Left lung (tissue), 14 donors: ENCODE measurements at regions of chr1 and their contacts with region 1.

Region 1: DNA sequence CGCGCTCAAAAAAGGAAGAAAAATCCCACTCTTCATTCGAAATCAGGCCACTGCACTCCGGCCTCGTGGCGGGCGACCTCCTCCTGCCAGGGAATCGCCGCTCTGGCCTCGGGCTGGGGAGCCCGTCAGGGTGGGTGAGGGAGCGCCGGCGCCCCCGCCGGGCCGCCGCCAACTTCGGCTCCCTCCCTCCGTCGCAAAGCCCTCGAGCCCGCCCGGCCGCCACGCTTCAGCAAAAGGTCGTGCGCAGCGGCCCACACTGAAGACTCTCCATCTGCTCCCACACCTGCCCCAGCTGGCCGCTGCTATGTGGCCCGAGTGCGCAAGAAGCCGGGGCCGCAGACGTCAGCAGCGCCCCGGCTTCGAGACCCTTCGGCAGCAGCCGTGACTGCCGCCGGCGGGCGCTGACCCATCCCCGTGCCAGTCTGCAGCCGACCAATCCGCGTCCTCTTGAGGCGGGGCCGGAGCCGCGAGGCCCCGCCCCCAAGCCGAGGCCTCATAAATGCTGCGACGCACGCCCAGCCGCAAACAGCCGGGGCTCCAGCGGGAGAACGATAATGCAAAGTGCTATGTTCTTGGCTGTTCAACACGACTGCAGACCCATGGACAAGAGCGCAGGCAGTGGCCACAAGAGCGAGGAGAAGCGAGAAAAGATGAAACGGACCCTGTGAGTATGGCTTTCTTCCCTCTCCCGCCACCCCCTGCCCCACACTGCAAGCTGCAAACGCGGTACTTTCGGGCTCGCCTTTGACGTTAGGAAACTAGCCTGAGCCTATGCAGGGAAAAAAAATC is at the start of gene RGS2:
- DNase-seq: peak; percentile 93 to 97 (median 96)
- ATAC-seq: peak; percentile 95
- H3K4me3 ChIP-seq: peak within 1 kb of the TSS; percentile 61 to 62
- H3K27ac ChIP-seq: peak within 1 kb of the TSS; percentile 93 to 96
- H3K4me1 ChIP-seq: peaks cover 4 to 56% of the 10 kb centered on the region in 2 donors
- H3K27me3 ChIP-seq: no peaks in the 10 kb centered on the region
- CTCF ChIP-seq: peak in 1 of 2 donors; percentile 13
- polyA plus RNA-seq, gene RGS2: 88.3 to 182 (median 140) TPM

Region 2: GRCh38 chr1:192654591-192655251 is 154.0 kb before region 1 on chr1:
- intact Hi-C with region 1: no loop called
- DNase-seq: no peak
- ATAC-seq: no peak
- H3K4me3 ChIP-seq: no peak overlapping the region
- H3K27ac ChIP-seq: no peak overlapping the region
- H3K4me1 ChIP-seq: no peaks in the 10 kb centered on the region
- H3K27me3 ChIP-seq: no peaks in the 10 kb centered on the region
- CTCF ChIP-seq: no peak

Region 3: DNA sequence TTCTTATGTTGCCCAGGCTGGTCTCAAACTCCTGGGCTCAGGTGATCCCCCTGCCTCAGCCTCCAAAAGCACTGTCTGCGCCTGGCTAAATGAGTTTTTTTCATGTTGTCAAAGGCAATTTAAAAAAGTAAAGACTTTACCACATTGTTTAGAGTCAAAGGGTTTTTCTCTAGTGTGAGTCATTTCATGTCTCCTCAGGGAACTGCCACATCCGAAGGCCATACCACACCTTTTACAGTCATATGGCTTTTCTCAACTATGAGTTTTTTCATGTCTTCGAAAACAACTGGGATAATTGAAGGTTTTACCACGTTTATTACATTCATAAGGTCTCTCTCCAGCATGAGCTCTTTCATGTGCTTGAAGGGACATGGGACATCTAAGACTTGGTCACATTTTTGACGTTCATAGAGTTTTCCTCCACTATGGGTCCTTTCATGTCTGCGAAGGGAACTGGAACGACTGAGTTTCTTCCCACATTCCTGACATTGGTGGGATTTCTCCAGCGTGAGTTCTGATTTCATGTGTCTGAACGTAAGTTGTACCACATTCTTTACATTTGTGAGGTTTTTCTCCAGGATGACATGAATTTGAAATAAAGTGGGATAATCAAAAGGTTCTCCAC is 184.8 kb after region 1 on chr1:
- intact Hi-C with region 1: no loop called
- DNase-seq: no peak
- ATAC-seq: no peak
- H3K4me3 ChIP-seq: no peak overlapping the region
- H3K27ac ChIP-seq: no peak overlapping the region
- H3K4me1 ChIP-seq: no peaks in the 10 kb centered on the region
- H3K27me3 ChIP-seq: no peaks in the 10 kb centered on the region
- CTCF ChIP-seq: no peak

Region 4: DNA sequence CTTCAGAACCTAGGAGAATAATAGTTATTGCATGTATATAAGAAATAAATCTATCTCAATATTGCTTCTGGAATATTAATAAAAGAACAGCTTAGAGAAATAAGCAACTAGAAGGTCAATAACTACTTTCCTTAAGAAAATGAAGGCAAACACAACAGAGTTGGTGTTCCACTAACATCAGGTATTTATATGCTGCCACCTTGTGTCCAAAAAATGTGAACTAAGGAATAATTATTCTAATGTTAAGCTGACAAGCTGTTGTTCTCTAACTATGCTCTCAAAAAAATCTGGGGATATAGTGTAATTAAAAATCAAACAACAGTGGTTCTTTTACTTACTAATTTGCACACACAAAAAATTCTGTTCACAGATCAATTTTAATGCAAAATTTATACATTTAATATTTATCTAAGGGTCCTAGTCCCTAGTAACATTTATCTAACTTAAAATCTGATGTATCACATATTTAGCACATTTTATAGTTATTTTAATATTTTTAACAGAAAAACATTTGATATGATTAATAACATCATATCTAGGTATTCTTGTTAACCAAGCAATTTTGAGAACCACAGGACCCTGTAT is 210.8 kb after region 1 on chr1:
- intact Hi-C with region 1: loop called in 1 of 2 experiments (anchors 10 kb)
- DNase-seq: peak in 2 of 4 donors; percentile 53 to 72
- ATAC-seq: peak; percentile 75
- H3K4me3 ChIP-seq: no peak overlapping the region
- H3K27ac ChIP-seq: no peak overlapping the region
- H3K4me1 ChIP-seq: no peaks in the 10 kb centered on the region
- H3K27me3 ChIP-seq: no peaks in the 10 kb centered on the region
- CTCF ChIP-seq: peak in 1 of 2 donors; percentile 22